GM12878 (cell line): ENCODE measurements at regions of chr6 and their contacts with region 1.

Region 1: DNA sequence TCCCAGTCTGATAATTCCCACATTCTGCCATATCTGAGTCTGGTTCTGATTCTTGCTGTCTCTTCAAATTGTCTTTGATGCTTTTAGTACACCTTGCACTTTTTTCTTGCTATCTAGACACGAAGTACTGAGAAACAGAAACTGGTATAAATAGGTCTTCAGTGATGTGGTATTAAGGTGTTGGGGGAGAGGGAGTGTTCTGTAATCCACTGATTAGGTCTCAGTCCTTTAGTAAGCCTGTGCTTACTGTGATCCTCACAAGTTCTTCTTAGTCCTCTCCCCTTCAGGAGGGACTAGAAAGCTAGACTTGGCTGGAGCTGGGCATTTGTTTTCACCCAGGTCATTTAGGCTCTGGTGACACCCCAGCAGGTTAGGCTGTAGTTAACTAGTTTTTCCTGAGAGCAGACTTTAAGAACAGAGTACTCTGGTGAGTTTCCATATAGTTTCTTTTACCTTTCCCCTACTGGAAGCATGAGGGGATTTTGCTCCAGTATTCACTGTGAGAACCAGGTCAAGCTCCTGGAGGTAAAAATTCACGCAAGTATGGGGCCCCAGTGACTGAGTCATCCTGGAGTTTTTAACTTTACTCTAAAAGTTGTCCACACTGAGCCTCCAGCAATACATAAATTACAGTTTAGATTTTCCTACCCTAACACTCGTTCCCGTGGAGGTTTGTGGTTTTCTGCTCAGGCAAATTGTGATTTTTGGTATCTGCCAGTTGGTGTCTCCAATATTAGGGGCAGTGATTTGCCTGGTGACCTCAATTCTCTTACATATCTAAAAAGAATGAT is 154.6 kb downstream of the CDKAL1 start:
- DNase-seq: peak; percentile 59
- ATAC-seq: peak; percentile 96
- H3K4me3 ChIP-seq: peak overlapping the region; percentile 38; the same call in 1 of the 2 replicates
- H3K27ac ChIP-seq: peak overlapping the region; percentile 72
- H3K4me1 ChIP-seq: peaks cover 13% of the 10 kb centered on the region
- H3K27me3 ChIP-seq: no peaks in the 10 kb centered on the region
- CTCF ChIP-seq: no peak
- EP300 ChIP-seq: no peak
- POLR2A ChIP-seq: no peak
- RAD21 ChIP-seq: peak; percentile 16; the same call in 1 of the 2 replicates

Region 2: GRCh38 chr6:20417819-20418218 is 271.1 kb before region 1 on chr6:
- CTCF ChIA-PET with region 1: no interaction called
- POLR2A ChIA-PET with region 1: no interaction called
- RAD21 ChIA-PET with region 1: no interaction called
- SMC1A ChIA-PET with region 1: no interaction called
- in situ Hi-C with region 1: no loop called
- intact Hi-C with region 1: no loop called
- DNase-seq: no peak
- ATAC-seq: peak; percentile 52
- H3K4me3 ChIP-seq: no peak overlapping the region
- H3K27ac ChIP-seq: peak overlapping the region; percentile 6; the same call in 1 of the 2 replicates
- H3K4me1 ChIP-seq: peaks cover 20% of the 10 kb centered on the region
- H3K27me3 ChIP-seq: no peaks in the 10 kb centered on the region
- CTCF ChIP-seq: no peak
- EP300 ChIP-seq: no peak
- POLR2A ChIP-seq: no peak
- RAD21 ChIP-seq: no peak

Region 3: GRCh38 chr6:20700375-20700774 is 11.5 kb after region 1 on chr6:
- CTCF ChIA-PET with region 1: interaction called, 5 read pairs
- POLR2A ChIA-PET with region 1: interaction called, 3 read pairs
- RAD21 ChIA-PET with region 1: interaction called, 7 read pairs
- SMC1A ChIA-PET with region 1: interaction called, 10 read pairs
- in situ Hi-C with region 1: no loop called
- intact Hi-C with region 1: no loop called
- DNase-seq: no peak
- ATAC-seq: peak; percentile 63
- H3K4me3 ChIP-seq: no peak overlapping the region
- H3K27ac ChIP-seq: no peak overlapping the region
- H3K4me1 ChIP-seq: no peaks in the 10 kb centered on the region
- H3K27me3 ChIP-seq: no peaks in the 10 kb centered on the region
- CTCF ChIP-seq: no peak
- EP300 ChIP-seq: no peak
- POLR2A ChIP-seq: no peak
- RAD21 ChIP-seq: no peak